MCF 10A (cell line): ENCODE measurements at regions of chr15 and their contacts with region 1.

Region 1: GRCh38 chr15:51649659-51650521 is 27.3 kb upstream of the DMXL2 start:
- DNase-seq: peak; percentile 82
- H3K4me3 Mint-ChIP-seq: no peak overlapping the region
- H3K27ac Mint-ChIP-seq: no peak overlapping the region
- H3K4me1 Mint-ChIP-seq: peaks cover 6% of the 10 kb centered on the region
- H3K27me3 Mint-ChIP-seq: peaks cover 11% of the 10 kb centered on the region
- CTCF ChIP-seq: peak; percentile 71

Region 2: DNA sequence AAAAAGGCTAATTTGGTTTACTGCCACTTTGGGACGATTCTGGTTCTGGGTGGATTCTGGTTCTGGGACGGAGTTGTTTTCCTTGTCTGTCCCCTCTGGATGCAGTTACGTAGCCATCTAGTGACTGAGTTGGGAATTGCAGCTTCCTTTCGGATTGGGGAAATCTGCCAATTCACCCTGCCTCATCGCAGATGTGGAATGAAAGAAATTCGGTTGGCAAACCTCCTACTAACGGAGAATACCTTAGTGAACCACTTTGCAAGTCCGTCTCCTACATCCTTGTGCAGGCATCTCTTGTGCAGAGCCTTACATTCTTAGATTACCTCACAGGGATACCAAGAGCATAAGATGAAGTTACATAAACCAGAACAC is 772.9 kb before region 1 on chr15:
- CTCF ChIA-PET with region 1: no interaction called
- POLR2A ChIA-PET with region 1: no interaction called
- intact Hi-C with region 1: no loop called
- DNase-seq: peak; percentile 90
- H3K4me3 Mint-ChIP-seq: peak overlapping the region; percentile 49
- H3K27ac Mint-ChIP-seq: peak overlapping the region; percentile 52
- H3K4me1 Mint-ChIP-seq: peaks cover 26% of the 10 kb centered on the region
- H3K27me3 Mint-ChIP-seq: peaks cover 13% of the 10 kb centered on the region
- CTCF ChIP-seq: peak; percentile 95

Region 3: DNA sequence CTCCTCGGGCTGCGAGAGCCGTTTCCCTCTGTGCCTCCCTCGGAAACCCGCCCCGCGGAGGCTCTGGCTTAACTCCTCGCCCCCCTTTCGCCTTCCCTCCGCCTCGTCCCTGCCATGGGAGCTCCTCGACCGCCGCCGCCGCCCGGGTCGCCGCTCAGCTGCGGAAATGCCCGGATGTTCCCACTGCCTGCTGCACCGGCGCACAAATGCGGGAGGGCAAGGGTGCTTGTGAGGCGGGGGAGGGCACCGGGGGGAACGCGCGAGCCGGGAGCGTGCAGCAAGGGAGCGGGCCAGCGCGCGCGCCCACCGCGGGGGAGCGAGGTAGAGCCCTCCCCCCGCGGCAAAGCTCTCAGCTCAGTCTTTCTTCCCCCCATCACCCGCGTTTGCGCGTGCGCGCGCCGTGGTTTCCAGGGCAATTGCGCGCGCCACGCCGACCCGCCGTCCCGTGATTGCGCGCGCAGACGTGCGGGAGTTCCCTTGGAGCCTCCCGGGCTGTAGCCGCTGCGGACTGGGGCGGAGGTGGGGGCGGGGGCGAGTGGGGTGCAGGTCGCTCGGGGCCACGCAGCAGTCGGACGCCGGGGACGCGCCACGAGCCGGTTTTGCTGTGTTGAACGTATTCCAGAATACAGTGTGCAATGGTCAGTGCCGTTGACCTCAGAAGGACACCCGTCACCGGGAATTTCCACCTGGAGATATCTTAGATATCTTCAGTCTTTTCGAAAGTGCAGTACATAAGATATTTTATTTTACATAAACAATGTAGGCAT is 27.1 kb before region 1 on chr15 and contains the start of gene DMXL2:
- CTCF ChIA-PET with region 1: interaction called, 11 read pairs
- POLR2A ChIA-PET with region 1: interaction called, 4 read pairs
- intact Hi-C with region 1: no loop called
- DNase-seq: peak; percentile 79
- H3K4me3 Mint-ChIP-seq: peak within 1 kb of the TSS; percentile 99
- H3K27ac Mint-ChIP-seq: peak within 1 kb of the TSS; percentile 90
- H3K4me1 Mint-ChIP-seq: peaks cover 27% of the 10 kb centered on the region
- H3K27me3 Mint-ChIP-seq: no peaks in the 10 kb centered on the region
- CTCF ChIP-seq: no peak
- total RNA-seq, gene DMXL2: 13.6 and 21.6 TPM in 2 replicates

Region 4: GRCh38 chr15:51726351-51727073 is 76.6 kb after region 1 on chr15:
- CTCF ChIA-PET with region 1: no interaction called
- POLR2A ChIA-PET with region 1: no interaction called
- intact Hi-C with region 1: loop called (anchors 5 kb)
- DNase-seq: peak; percentile 92
- H3K4me3 Mint-ChIP-seq: no peak overlapping the region
- H3K27ac Mint-ChIP-seq: no peak overlapping the region
- H3K4me1 Mint-ChIP-seq: peaks cover 31% of the 10 kb centered on the region
- H3K27me3 Mint-ChIP-seq: no peaks in the 10 kb centered on the region
- CTCF ChIP-seq: no peak

Region 5: DNA sequence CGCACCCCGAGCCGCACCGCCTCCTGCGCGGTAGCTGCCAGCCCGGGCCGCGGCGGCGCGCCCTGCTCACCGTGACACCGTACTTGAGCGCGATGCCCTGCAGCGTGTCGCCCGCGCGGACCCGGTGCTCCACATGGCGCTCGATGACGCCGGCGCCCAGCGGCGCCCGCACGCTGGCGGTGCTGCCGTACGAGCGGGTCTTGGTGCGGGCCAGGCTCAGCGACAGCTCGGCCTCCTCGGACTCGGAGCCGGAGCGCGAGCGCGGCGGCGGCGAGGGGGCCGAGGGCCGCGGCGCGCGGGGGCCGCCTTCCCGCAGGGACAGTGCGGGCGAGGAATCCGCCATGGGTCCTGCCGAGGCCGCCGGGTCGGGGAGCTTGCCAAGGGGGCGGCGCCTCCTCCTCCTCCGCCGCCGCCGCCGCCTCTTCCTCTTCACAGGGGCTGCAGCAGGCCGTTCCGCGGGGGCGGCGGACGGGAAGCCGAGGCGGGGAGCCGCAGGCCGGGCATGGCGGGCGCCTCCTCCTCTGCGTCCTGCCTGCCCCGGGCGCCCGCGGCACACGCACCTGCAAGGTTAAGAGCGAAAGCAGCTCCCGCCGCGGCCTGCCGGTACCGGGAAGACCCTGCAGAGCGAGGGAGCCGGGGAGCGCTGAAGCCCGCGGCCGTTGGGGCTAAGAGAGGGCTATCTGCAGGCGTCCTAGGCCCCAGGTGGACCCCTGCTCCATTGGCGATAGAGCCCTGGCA is 87.6 kb after region 1 on chr15 and contains the start of gene LYSMD2:
- CTCF ChIA-PET with region 1: interaction called, 11 read pairs
- POLR2A ChIA-PET with region 1: interaction called, 12 read pairs
- intact Hi-C with region 1: no loop called
- DNase-seq: peak; percentile 63
- H3K4me3 Mint-ChIP-seq: peak within 1 kb of the TSS; percentile 77
- H3K27ac Mint-ChIP-seq: peak within 1 kb of the TSS; percentile 39
- H3K4me1 Mint-ChIP-seq: peaks cover 20% of the 10 kb centered on the region
- H3K27me3 Mint-ChIP-seq: no peaks in the 10 kb centered on the region
- CTCF ChIP-seq: no peak
- total RNA-seq, gene LYSMD2: 13.4 and 14.3 TPM in 2 replicates

Region 6: DNA sequence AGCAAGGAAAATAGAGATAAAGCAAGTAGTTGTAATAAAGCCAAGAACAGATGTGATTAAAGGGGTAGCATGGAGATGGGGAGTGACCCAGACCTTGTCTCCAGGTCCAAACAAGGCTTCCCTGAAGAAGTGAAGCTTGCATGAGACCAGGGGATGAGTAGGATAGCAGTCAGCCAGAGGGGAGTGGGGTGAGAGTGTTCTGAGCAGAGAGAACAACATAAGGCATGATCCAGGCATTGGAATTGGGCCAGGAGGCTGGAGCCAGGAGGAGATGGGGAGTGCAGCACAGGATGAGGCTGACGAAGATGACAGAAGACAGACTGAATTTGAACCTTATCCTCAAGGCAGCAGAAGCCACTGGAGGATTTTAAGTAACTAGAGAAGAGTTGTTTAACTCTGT is 108.8 kb after region 1 on chr15:
- CTCF ChIA-PET with region 1: interaction called, 29 read pairs
- POLR2A ChIA-PET with region 1: interaction called, 8 read pairs
- intact Hi-C with region 1: no loop called
- DNase-seq: peak; percentile 48
- H3K4me3 Mint-ChIP-seq: no peak overlapping the region
- H3K27ac Mint-ChIP-seq: no peak overlapping the region
- H3K4me1 Mint-ChIP-seq: peaks cover 17% of the 10 kb centered on the region
- H3K27me3 Mint-ChIP-seq: peaks cover 2% of the 10 kb centered on the region
- CTCF ChIP-seq: no peak

Region 7: DNA sequence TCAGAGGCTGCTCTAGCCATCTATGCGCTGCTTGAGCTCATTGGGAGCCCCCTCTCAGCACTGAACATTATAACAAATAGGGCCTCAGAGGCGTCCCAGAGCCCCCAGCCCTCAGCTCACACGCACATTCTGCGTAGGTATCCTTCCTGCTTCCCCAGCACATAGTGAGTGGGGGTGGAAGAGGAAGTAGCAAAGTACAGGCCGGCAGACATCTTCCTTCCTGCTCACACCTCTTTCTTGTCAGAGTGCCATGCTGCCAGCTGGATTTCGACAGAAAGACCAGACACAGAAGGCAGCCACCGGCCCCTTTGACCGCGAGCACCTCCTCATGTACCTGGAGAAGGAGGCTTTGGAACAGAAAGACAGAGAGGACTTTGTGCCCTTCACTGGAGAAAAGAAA is 118.1 kb after region 1 on chr15:
- CTCF ChIA-PET with region 1: interaction called, 184 read pairs
- POLR2A ChIA-PET with region 1: no interaction called
- intact Hi-C with region 1: no loop called
- DNase-seq: no peak
- H3K4me3 Mint-ChIP-seq: no peak overlapping the region
- H3K27ac Mint-ChIP-seq: no peak overlapping the region
- H3K4me1 Mint-ChIP-seq: no peaks in the 10 kb centered on the region
- H3K27me3 Mint-ChIP-seq: no peaks in the 10 kb centered on the region
- CTCF ChIP-seq: no peak

Region 8: DNA sequence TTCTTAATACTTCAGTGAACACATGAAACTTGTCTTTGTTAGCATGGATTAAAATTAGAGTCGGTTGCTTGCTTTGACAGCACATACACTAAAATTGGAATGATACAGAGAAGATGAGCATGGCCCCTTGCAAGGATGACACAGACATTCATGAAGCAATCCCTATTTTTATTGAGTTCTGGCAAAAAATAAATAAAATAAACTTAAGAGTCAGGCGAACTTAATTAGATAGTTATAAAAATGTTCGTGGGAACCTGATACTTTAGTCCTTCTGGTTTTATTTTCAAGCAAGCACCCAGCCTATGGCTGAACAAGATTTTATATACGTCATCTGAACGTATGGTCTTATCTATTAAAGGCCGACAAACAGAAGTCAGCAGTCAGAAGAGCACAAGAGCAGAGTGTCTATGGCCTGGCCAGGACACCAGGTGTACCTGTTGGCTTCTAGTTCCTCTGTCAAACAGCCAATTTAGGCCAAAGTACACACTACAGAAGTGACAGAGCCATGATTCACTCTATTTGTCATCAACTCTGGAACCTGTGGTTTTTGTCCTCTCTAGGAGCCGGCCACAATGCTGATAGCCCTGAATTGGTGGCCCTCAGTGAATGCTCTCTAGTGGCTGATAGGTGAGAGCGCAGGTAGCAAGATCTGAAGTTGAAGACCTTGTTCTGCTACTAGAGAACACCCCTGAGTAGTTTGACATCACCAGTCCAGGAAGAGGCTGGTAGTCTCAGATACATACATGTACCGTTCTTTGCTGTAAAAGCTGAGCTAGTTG is 257.4 kb after region 1 on chr15:
- CTCF ChIA-PET with region 1: interaction called, 3 read pairs
- POLR2A ChIA-PET with region 1: interaction called, 3 read pairs
- intact Hi-C with region 1: loop called (anchors 10 kb)
- DNase-seq: peak; percentile 71
- H3K4me3 Mint-ChIP-seq: no peak overlapping the region
- H3K27ac Mint-ChIP-seq: peak overlapping the region; percentile 23
- H3K4me1 Mint-ChIP-seq: peaks cover 19% of the 10 kb centered on the region
- H3K27me3 Mint-ChIP-seq: no peaks in the 10 kb centered on the region
- CTCF ChIP-seq: peak; percentile 13

Region 9: DNA sequence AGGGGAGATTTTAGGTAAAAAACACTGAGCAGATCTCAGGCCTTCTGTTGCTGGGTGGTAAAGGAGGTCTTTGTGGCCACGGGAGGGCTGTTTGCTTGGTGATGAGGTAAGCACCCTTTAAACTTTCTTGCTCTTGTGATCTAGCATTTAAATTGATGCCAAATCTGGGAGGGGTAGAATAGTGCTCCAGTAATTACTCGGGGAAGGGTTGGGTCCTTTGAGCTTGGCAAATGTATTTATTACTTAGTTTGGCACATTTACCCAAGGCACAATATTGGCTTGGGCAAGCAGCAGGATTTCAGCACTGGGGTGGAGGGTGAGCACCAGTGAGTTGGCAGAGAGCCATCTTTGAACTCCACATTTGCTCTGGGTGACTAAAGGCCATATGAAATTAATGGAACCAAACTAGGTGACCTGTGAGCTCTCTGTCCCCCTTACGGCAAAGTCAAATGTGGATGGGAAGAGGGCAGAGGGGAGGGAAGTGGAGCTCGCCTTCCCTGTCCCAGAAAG is 1326.1 kb after region 1 on chr15:
- CTCF ChIA-PET with region 1: no interaction called
- POLR2A ChIA-PET with region 1: no interaction called
- intact Hi-C with region 1: no loop called
- DNase-seq: no peak
- H3K4me3 Mint-ChIP-seq: no peak overlapping the region
- H3K27ac Mint-ChIP-seq: no peak overlapping the region
- H3K4me1 Mint-ChIP-seq: no peaks in the 10 kb centered on the region
- H3K27me3 Mint-ChIP-seq: peaks cover 54% of the 10 kb centered on the region
- CTCF ChIP-seq: no peak